T-cell (primary cell): ENCODE measurements at regions of chr15 and their contacts with region 1.

Region 1: DNA sequence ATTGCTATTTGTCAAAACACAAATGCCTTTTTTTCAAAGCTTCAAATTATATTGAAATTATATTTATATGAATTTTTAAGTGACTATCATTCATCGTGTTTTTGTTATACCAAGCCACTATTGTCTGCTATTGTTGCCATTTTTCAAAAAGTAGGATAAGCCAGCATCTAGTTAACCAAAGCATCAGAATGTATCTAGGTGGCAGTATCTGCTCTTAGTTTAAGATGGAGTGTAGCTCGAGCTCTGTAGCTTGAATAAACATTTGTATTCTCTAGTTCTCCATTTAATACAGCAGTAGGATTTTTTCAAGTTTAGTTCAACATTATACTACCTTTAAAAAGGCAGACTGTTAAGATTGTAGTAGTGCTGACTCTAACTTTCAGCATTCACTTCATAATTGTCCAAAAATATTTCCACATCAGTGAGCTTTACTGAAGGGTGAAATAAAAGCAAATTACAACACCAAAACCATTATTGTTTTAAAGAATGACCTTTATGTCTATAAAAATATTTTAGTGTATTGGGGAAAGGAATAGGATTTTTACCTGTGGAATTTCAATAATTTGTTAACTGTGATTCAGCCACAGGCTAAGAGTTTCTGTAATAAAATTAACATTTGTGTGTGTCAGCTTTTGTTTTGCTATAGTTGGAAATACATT is 19.6 kb upstream of the C15orf61 start:
- DNase-seq: peak in 1 of 35 experiments; percentile 32
- ATAC-seq: peak in 3 of 4 experiments; percentile 46 to 64 (median 47)
- H3K4me3 ChIP-seq: no peak overlapping the region
- H3K4me3 Mint-ChIP-seq: no peak overlapping the region
- H3K27ac ChIP-seq: no peak overlapping the region
- H3K27ac Mint-ChIP-seq: no peak overlapping the region
- H3K4me1 ChIP-seq: no peaks in the 10 kb centered on the region
- H3K4me1 Mint-ChIP-seq: no peaks in the 10 kb centered on the region
- H3K27me3 ChIP-seq: no peaks in the 10 kb centered on the region
- H3K27me3 Mint-ChIP-seq: no peaks in the 10 kb centered on the region

Region 2: DNA sequence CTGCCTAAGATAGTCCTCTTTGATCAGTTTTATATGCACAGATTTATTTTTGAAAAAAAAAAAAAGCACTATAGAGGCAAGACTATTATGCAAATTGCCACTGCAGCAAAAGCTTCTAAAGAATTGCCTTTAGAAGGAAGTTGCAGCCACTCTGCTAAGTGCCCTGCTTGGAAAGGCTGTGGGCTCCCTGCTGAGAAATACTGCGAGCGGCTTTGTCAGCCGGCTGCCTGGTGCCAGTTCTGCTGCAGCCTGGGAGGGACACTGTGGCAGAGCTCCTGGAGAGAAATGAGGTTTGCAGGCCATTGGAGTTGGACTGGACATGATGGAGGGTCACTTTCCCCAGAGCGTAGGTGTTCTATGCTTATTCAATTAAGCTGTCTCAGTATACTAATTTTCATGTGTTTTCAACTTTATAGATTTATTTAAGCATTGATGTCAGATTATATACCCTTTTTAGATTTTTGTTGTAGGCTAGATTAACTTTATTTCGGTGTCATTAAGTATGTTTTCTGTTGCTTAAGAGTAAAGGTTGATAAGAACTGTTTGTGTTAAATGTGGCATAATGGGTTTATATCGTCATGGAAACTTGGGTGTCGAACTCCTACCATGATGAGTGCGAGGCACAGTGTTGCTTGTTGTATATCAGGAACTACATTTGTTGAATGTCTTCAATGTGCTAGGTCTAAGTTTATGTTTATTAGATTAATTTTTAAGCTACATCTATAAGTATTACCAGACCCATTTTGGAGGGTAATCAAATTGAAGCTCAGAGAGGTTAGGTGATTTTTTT is 47.8 kb after region 1 on chr15:
- CTCF ChIA-PET with region 1: no interaction called
- POLR2A ChIA-PET with region 1: no interaction called
- DNase-seq: no peak
- ATAC-seq: no peak
- H3K4me3 ChIP-seq: no peak overlapping the region
- H3K4me3 Mint-ChIP-seq: no peak overlapping the region
- H3K27ac ChIP-seq: no peak overlapping the region
- H3K27ac Mint-ChIP-seq: no peak overlapping the region
- H3K4me1 ChIP-seq: peaks cover 7 to 8% of the 10 kb centered on the region in 2 experiments
- H3K4me1 Mint-ChIP-seq: peaks cover 42 to 47% (median 42%) of the 10 kb centered on the region in 3 donors
- H3K27me3 ChIP-seq: no peaks in the 10 kb centered on the region
- H3K27me3 Mint-ChIP-seq: no peaks in the 10 kb centered on the region

Region 3: GRCh38 chr15:68085052-68085451 is 583.7 kb after region 1 on chr15:
- CTCF ChIA-PET with region 1: interaction called in 1 of 2 experiments, 10 read pairs
- POLR2A ChIA-PET with region 1: no interaction called
- DNase-seq: no peak
- ATAC-seq: no peak
- H3K4me3 ChIP-seq: no peak overlapping the region
- H3K4me3 Mint-ChIP-seq: no peak overlapping the region
- H3K27ac ChIP-seq: no peak overlapping the region
- H3K27ac Mint-ChIP-seq: no peak overlapping the region
- H3K4me1 ChIP-seq: peaks cover 0 to 15% of the 10 kb centered on the region in 2 experiments
- H3K4me1 Mint-ChIP-seq: peaks cover 67 to 81% (median 67%) of the 10 kb centered on the region in 3 donors
- H3K27me3 ChIP-seq: no peaks in the 10 kb centered on the region
- H3K27me3 Mint-ChIP-seq: no peaks in the 10 kb centered on the region